ENCODE measurements at regions of chr17 and their contacts with region 1.

Region 1: GRCh38 chr17:74873038-74873873 is 462 bp upstream of the FDXR start:
- DNase-seq: peak; percentile 100
- H3K4me3 Mint-ChIP-seq: peak overlapping the region; percentile 94
- H3K27ac Mint-ChIP-seq: peak overlapping the region; percentile 82
- H3K4me1 Mint-ChIP-seq: peaks cover 30% of the 10 kb centered on the region
- H3K27me3 Mint-ChIP-seq: no peaks in the 10 kb centered on the region
- CTCF ChIP-seq: no peak

Region 2: GRCh38 chr17:74748529-74749365 is 124.5 kb before region 1 on chr17 and contains the start of gene NHERF1:
- CTCF ChIA-PET with region 1: no interaction called
- POLR2A ChIA-PET with region 1: interaction called, 31 read pairs
- intact Hi-C with region 1: no loop called
- DNase-seq: peak; percentile 94
- H3K4me3 Mint-ChIP-seq: peak within 1 kb of the TSS; percentile 88
- H3K27ac Mint-ChIP-seq: peak within 1 kb of the TSS; percentile 57
- H3K4me1 Mint-ChIP-seq: peaks cover 34% of the 10 kb centered on the region
- H3K27me3 Mint-ChIP-seq: no peaks in the 10 kb centered on the region
- CTCF ChIP-seq: no peak
- total RNA-seq, gene NHERF1: 23.9 and 25.3 TPM in 2 replicates

Region 3: GRCh38 chr17:74776044-74776977 is 96.9 kb before region 1 on chr17 and contains the start of gene NAT9:
- CTCF ChIA-PET with region 1: interaction called, 4 read pairs
- POLR2A ChIA-PET with region 1: interaction called, 10 read pairs
- intact Hi-C with region 1: no loop called
- DNase-seq: peak; percentile 95
- H3K4me3 Mint-ChIP-seq: peak within 1 kb of the TSS; percentile 100
- H3K27ac Mint-ChIP-seq: peak within 1 kb of the TSS; percentile 98
- H3K4me1 Mint-ChIP-seq: peaks cover 16% of the 10 kb centered on the region
- H3K27me3 Mint-ChIP-seq: no peaks in the 10 kb centered on the region
- CTCF ChIP-seq: no peak
- total RNA-seq, gene NAT9: 58.1 and 64.8 TPM in 2 replicates

Region 4: GRCh38 chr17:74812109-74813009 is 60.9 kb before region 1 on chr17:
- CTCF ChIA-PET with region 1: no interaction called
- POLR2A ChIA-PET with region 1: no interaction called
- intact Hi-C with region 1: no loop called
- DNase-seq: no peak
- H3K4me3 Mint-ChIP-seq: no peak overlapping the region
- H3K27ac Mint-ChIP-seq: no peak overlapping the region
- H3K4me1 Mint-ChIP-seq: no peaks in the 10 kb centered on the region
- H3K27me3 Mint-ChIP-seq: no peaks in the 10 kb centered on the region
- CTCF ChIP-seq: no peak

Region 5: DNA sequence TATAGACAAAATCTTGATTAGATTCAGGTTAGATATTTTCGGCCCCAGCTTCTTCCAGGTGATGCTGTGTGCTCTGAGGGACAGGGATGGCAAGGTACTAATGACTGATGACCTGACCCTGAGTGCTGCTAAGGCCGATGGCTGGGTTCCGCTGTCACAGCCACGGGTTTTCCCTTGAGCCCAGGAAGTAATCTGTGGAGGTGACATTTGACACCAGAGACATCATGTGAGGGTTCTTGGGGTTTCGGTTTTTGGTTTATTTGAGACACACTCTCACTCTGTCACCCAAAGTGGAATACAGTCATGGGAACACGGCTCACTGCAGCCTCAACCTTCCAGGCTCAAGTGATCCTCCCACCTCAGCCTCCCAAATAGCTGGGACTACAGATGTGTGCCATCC is 72.3 kb after region 1 on chr17:
- CTCF ChIA-PET with region 1: no interaction called
- POLR2A ChIA-PET with region 1: interaction called, 5 read pairs
- intact Hi-C with region 1: loop called (anchors 2 kb)
- DNase-seq: no peak
- H3K4me3 Mint-ChIP-seq: no peak overlapping the region
- H3K27ac Mint-ChIP-seq: peak overlapping the region; percentile 83
- H3K4me1 Mint-ChIP-seq: peaks cover 20% of the 10 kb centered on the region
- H3K27me3 Mint-ChIP-seq: no peaks in the 10 kb centered on the region
- CTCF ChIP-seq: no peak

Region 6: DNA sequence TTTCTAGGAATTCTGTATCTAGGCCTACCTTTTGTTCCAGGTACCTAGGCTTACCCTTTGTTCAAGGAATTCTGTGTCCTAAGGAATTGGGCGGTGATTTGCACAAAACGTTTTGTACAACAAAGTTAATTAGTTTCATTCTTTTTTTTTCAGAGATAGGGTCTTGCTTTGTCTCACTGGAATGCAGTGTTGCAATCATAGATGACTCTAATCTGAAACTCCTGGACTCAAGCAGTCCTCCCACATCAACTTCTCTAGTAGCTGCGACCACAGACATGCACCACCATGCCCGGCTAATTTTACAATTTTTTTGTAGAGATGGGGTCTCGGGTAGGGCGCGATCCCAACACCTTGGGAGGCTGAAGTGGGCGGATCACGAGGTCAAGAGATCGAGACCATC is 121.2 kb after region 1 on chr17:
- CTCF ChIA-PET with region 1: no interaction called
- POLR2A ChIA-PET with region 1: interaction called, 12 read pairs
- intact Hi-C with region 1: no loop called
- DNase-seq: peak; percentile 43
- H3K4me3 Mint-ChIP-seq: no peak overlapping the region
- H3K27ac Mint-ChIP-seq: no peak overlapping the region
- H3K4me1 Mint-ChIP-seq: peaks cover 25% of the 10 kb centered on the region
- H3K27me3 Mint-ChIP-seq: no peaks in the 10 kb centered on the region
- CTCF ChIP-seq: no peak

Region 7: DNA sequence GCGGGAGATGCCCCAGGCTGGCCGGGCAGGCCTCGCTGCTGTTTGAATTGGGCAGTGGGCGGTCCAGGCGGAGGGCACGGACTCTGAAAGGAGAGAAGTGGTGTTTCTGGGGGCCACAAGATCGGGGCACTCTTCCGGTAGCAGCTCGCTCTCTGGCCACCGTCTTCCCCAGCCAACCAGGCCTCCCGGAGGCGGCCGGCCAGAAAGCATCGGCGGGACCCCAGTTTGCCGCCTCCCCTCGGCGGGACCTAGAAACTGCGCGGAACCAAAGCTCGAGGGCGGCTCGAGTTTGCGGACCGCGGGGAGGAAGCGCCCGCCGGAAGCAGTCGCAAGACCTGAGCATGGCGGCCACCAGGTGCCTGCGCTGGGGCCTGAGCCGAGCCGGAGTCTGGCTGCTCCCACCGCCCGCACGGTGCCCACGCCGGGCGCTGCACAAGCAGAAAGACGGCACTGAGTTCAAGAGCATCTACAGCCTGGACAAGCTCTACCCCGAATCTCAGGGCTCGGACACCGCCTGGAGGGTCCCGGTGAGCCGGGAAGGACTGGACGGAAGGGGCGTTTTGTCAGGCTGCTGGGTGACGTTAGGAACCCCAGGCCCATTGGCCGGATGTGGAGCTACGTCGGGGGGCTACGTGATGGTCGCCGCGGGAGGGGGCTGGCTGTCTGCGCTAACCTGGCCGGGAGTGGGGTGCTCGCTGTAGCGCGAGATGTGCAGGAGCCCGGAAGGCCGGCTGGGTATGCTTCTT is 139.3 kb after region 1 on chr17 and contains the start of gene MRPL58:
- CTCF ChIA-PET with region 1: no interaction called
- POLR2A ChIA-PET with region 1: interaction called, 11 read pairs
- intact Hi-C with region 1: no loop called
- DNase-seq: peak; percentile 80
- H3K4me3 Mint-ChIP-seq: peak within 1 kb of the TSS; percentile 96
- H3K27ac Mint-ChIP-seq: peak within 1 kb of the TSS; percentile 77
- H3K4me1 Mint-ChIP-seq: peaks cover 22% of the 10 kb centered on the region
- H3K27me3 Mint-ChIP-seq: no peaks in the 10 kb centered on the region
- CTCF ChIP-seq: peak; percentile 49
- total RNA-seq, gene MRPL58: 56.5 and 71.2 TPM in 2 replicates

Region 8: DNA sequence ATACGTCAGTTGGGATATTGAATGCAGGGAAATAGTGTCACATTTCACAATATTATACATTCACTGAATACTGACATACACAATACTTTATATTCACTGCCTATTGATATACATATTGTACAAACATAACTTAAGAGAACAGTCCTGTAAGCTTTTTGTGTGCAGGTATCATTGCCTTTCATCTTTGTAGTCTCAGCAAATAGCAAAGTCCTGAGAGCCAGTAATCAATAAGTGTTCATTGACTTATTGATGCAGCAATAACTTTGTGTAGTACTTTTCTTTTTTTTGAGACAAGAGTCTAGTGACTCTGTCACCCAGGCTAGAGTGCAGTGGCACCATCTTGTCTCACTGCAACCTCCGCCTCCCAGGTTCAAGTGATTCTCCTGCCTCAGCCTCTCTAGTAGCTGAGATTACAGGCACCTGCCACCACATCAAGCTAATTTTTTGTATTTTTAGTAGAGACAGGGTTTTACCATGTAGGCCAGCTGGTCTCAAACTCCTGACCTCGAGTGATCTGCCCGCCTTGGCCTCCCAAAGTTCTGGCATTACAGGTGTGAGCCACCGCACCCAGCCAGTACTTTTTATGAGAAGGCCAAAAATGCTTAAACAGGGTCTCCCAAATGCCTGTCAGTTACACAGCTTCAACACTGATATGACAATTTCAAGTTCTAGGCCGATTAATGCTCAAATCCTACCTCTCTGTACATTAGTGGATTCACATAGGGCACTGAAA is 326.8 kb after region 1 on chr17:
- CTCF ChIA-PET with region 1: no interaction called
- POLR2A ChIA-PET with region 1: no interaction called
- intact Hi-C with region 1: loop called (anchors 5 kb)
- DNase-seq: no peak
- H3K4me3 Mint-ChIP-seq: no peak overlapping the region
- H3K27ac Mint-ChIP-seq: no peak overlapping the region
- H3K4me1 Mint-ChIP-seq: peaks cover 6% of the 10 kb centered on the region
- H3K27me3 Mint-ChIP-seq: no peaks in the 10 kb centered on the region
- CTCF ChIP-seq: no peak

Measured in MCF 10A (cell line).